ENCODE measurements at regions of chr6 and their contacts with region 1.

Region 1: GRCh38 chr6:131116749-131117360 is 18.4 kb upstream of the AKAP7 start:
- DNase-seq: no peak
- H3K4me3 ChIP-seq: no peak overlapping the region
- H3K27ac ChIP-seq: no peak overlapping the region
- H3K4me1 ChIP-seq: no peaks in the 10 kb centered on the region
- H3K27me3 ChIP-seq: no peaks in the 10 kb centered on the region
- CTCF ChIP-seq: peak; percentile 15 to 62 (median 45)
- POLR2A ChIP-seq: no peak

Region 2: DNA sequence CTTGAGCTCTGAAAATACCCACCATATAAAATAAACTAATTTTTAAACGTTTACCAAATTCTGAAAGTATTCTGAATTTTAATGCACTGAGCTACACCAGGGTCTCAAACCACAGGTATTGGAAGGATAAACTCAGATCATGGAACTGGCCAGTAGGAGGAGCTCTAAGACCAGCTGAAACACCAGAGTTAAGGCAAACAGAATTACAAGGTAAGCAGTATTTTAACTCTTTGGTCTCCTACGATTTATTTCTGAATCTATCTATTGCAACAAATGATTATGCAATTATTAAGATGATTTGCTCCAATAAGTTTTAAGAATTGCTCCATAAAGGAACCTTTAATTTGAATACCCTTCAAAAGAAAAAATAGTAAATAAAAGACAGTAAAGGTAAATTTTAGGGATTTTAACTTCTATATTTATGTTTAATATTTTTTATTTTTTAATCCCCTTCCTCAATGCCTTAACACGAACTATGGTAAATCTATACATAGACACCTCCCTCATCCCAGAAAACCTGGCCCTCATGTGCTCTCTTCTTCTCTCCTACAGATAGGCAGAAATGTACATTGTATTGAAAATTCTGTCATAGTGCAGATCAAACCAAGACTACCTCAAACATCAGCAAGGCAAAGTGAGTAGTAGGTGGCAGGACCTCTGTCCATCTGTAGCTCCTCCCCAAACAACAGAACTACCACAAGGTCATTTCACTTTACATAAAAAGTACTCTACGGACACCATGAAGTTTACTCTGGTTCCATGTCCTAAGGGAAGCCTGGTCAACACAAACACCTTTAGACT is 231.3 kb before region 1 on chr6:
- intact Hi-C with region 1: loop called (anchors 5 kb)
- DNase-seq: no peak
- H3K4me3 ChIP-seq: no peak overlapping the region
- H3K27ac ChIP-seq: no peak overlapping the region
- H3K4me1 ChIP-seq: peaks cover 0 to 5% (median 0%) of the 10 kb centered on the region in 3 donors
- H3K27me3 ChIP-seq: no peaks in the 10 kb centered on the region
- CTCF ChIP-seq: peak; percentile 76 to 93 (median 88)
- POLR2A ChIP-seq: no peak

Measured in esophagus squamous epithelium (tissue), 5 donors.